BJ (cell line): ENCODE measurements at regions of chr12 and their contacts with region 1.

Region 1: GRCh38 chr12:77049767-77050353 is 15.5 kb downstream of the E2F7 start:
- DNase-seq: peak; percentile 12
- H3K4me3 ChIP-seq: no peak overlapping the region
- H3K27me3 ChIP-seq: no peaks in the 10 kb centered on the region
- CTCF ChIP-seq: peak; percentile 81

Region 2: GRCh38 chr12:76666290-76666835 is 383.5 kb before region 1 on chr12:
- CTCF ChIA-PET with region 1: no interaction called
- POLR2A ChIA-PET with region 1: no interaction called
- DNase-seq: no peak
- H3K4me3 ChIP-seq: no peak overlapping the region
- H3K27me3 ChIP-seq: no peaks in the 10 kb centered on the region
- CTCF ChIP-seq: no peak

Region 3: DNA sequence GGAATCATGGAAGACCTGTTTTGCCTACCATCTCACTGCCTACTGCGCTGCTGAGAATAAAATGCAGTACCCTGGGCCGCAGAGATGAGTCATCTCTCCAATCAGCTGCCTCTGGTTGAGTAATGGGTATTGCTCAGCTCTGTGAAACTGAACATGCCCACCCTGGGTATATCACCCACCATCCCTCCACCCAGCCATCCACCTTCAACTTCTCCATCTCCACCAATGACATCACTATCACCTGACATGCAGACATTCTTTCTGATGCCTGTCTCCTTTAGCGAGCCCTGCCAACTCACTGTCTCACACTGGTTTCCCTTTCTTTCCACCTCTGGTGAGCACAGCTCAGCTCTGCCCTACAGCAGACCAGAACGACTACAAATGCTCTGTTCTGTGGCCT is 18.1 kb before region 1 on chr12:
- CTCF ChIA-PET with region 1: interaction called, 20 read pairs
- POLR2A ChIA-PET with region 1: no interaction called
- DNase-seq: no peak
- H3K4me3 ChIP-seq: no peak overlapping the region
- H3K27me3 ChIP-seq: no peaks in the 10 kb centered on the region
- CTCF ChIP-seq: no peak

Region 4: DNA sequence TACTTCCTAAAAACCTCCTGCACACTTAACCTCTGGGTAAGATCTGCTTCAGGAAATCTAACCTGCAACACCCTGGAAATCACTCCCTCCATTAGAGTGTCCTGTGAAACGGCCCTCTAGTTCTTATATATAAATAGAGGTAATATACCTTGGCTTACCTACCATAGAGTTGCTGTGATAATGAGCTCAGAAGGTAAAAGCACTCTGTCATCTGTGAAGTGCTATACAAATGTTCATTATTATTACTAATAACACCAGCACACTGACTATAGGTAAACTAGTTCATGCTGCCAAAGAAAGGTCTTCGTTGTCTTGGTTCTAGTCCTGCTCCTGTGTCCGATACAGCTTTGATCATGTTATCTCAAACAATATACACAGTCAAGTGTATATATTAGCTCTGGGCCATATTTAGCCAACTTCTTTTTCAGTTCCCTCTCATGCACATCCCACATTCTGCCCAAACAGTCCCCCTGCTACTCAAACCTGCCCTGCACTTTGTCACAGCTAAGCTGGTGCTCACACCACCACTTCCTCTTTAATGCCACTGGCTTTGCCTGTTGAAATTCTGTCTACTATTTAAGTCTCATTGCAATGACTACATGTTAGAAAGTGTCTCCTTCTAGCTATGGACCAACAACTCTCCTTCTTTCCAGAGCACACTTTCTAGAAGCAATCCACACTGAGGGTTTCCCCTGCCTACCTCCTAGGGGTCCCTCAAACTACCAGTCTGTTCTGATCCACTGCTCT is 10.4 kb after region 1 on chr12:
- CTCF ChIA-PET with region 1: interaction called, 25 read pairs
- POLR2A ChIA-PET with region 1: no interaction called
- DNase-seq: no peak
- H3K4me3 ChIP-seq: no peak overlapping the region
- H3K27me3 ChIP-seq: no peaks in the 10 kb centered on the region
- CTCF ChIP-seq: no peak

Region 5: GRCh38 chr12:77494296-77494695 is 444.4 kb after region 1 on chr12:
- CTCF ChIA-PET with region 1: no interaction called
- POLR2A ChIA-PET with region 1: no interaction called
- DNase-seq: no peak
- H3K4me3 ChIP-seq: no peak overlapping the region
- H3K27me3 ChIP-seq: no peaks in the 10 kb centered on the region
- CTCF ChIP-seq: no peak

Region 6: DNA sequence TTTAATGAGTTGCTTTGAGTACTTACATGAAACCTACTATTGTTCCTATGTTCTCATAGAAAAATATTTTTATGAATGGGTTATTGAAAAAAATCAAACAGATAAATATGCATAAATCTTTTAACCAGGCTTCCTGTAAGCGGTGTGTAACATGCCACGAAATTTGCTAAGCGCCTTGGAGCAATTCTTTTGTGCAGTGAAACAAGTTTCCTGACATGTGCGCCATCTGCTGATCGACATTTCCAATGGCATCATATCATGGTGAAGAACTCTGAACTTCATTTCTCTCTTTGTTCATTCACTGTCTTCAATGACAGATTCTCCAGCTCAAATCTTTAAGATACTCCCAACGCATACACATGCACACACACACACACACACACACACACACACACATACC is 635.3 kb after region 1 on chr12:
- CTCF ChIA-PET with region 1: interaction called, 17 read pairs
- POLR2A ChIA-PET with region 1: no interaction called
- DNase-seq: peak; percentile 9
- H3K4me3 ChIP-seq: no peak overlapping the region
- H3K27me3 ChIP-seq: no peaks in the 10 kb centered on the region
- CTCF ChIP-seq: peak; percentile 63